ENCODE measurements at regions of chr1 and their contacts with region 1.

Region 1: GRCh38 chr1:214328770-214329469 is 48.0 kb downstream of the SMYD2 start:
- DNase-seq: peak; percentile 62 to 87 (median 75)
- ATAC-seq: peak; percentile 98
- H3K4me3 ChIP-seq: no peak overlapping the region
- H3K4me3 Mint-ChIP-seq: no peak overlapping the region
- H3K27ac ChIP-seq: no peak overlapping the region
- H3K27ac Mint-ChIP-seq: no peak overlapping the region
- H3K4me1 ChIP-seq: no peaks in the 10 kb centered on the region
- H3K4me1 Mint-ChIP-seq: no peaks in the 10 kb centered on the region
- H3K27me3 ChIP-seq: no peaks in the 10 kb centered on the region
- H3K27me3 Mint-ChIP-seq: no peaks in the 10 kb centered on the region
- CTCF ChIP-seq: peak; percentile 79

Region 2: GRCh38 chr1:213122514-213122929 is 1206.4 kb before region 1 on chr1:
- CTCF ChIA-PET with region 1: interaction called, 5 read pairs
- POLR2A ChIA-PET with region 1: no interaction called
- intact Hi-C with region 1: loop called in 1 of 2 experiments (anchors 5 kb)
- DNase-seq: peak in 2 of 9 experiments; percentile 33 to 47
- ATAC-seq: no peak
- H3K4me3 ChIP-seq: no peak overlapping the region
- H3K4me3 Mint-ChIP-seq: no peak overlapping the region
- H3K27ac ChIP-seq: no peak overlapping the region
- H3K27ac Mint-ChIP-seq: no peak overlapping the region
- H3K4me1 ChIP-seq: no peaks in the 10 kb centered on the region
- H3K4me1 Mint-ChIP-seq: peaks cover 6% of the 10 kb centered on the region
- H3K27me3 ChIP-seq: no peaks in the 10 kb centered on the region
- H3K27me3 Mint-ChIP-seq: no peaks in the 10 kb centered on the region
- CTCF ChIP-seq: peak; percentile 72

Region 3: GRCh38 chr1:213669964-213670691 is 658.8 kb before region 1 on chr1:
- CTCF ChIA-PET with region 1: no interaction called
- POLR2A ChIA-PET with region 1: no interaction called
- intact Hi-C with region 1: loop called in 1 of 2 experiments (anchors 10 kb)
- DNase-seq: peak; percentile 1 to 62 (median 12)
- ATAC-seq: peak; percentile 90
- H3K4me3 ChIP-seq: no peak overlapping the region
- H3K4me3 Mint-ChIP-seq: no peak overlapping the region
- H3K27ac ChIP-seq: no peak overlapping the region
- H3K27ac Mint-ChIP-seq: peak overlapping the region; percentile 25
- H3K4me1 ChIP-seq: peaks cover 5% of the 10 kb centered on the region
- H3K4me1 Mint-ChIP-seq: peaks cover 7% of the 10 kb centered on the region
- H3K27me3 ChIP-seq: no peaks in the 10 kb centered on the region
- H3K27me3 Mint-ChIP-seq: no peaks in the 10 kb centered on the region
- CTCF ChIP-seq: no peak

Region 4: GRCh38 chr1:214271174-214271858 is 57.6 kb before region 1 on chr1:
- CTCF ChIA-PET with region 1: interaction called, 87 read pairs
- POLR2A ChIA-PET with region 1: no interaction called
- intact Hi-C with region 1: loop called in 1 of 2 experiments (anchors 2 kb)
- DNase-seq: peak in 2 of 9 experiments; percentile 23 to 45
- ATAC-seq: no peak
- H3K4me3 ChIP-seq: no peak overlapping the region
- H3K4me3 Mint-ChIP-seq: no peak overlapping the region
- H3K27ac ChIP-seq: no peak overlapping the region
- H3K27ac Mint-ChIP-seq: no peak overlapping the region
- H3K4me1 ChIP-seq: no peaks in the 10 kb centered on the region
- H3K4me1 Mint-ChIP-seq: peaks cover 4% of the 10 kb centered on the region
- H3K27me3 ChIP-seq: peaks cover 0 to 3% of the 10 kb centered on the region in 2 experiments
- H3K27me3 Mint-ChIP-seq: peaks cover 2% of the 10 kb centered on the region
- CTCF ChIP-seq: no peak

Region 5: GRCh38 chr1:214310010-214310409 is 18.9 kb before region 1 on chr1:
- CTCF ChIA-PET with region 1: interaction called, 35 read pairs
- POLR2A ChIA-PET with region 1: interaction called, 4 read pairs
- intact Hi-C with region 1: no loop called
- DNase-seq: no peak
- ATAC-seq: no peak
- H3K4me3 ChIP-seq: peak overlapping the region in 1 of 2 experiments; percentile 6
- H3K4me3 Mint-ChIP-seq: peak overlapping the region; percentile 20
- H3K27ac ChIP-seq: no peak overlapping the region
- H3K27ac Mint-ChIP-seq: no peak overlapping the region
- H3K4me1 ChIP-seq: peaks cover 8% of the 10 kb centered on the region
- H3K4me1 Mint-ChIP-seq: peaks cover 38% of the 10 kb centered on the region
- H3K27me3 ChIP-seq: no peaks in the 10 kb centered on the region
- H3K27me3 Mint-ChIP-seq: no peaks in the 10 kb centered on the region
- CTCF ChIP-seq: no peak

Region 6: DNA sequence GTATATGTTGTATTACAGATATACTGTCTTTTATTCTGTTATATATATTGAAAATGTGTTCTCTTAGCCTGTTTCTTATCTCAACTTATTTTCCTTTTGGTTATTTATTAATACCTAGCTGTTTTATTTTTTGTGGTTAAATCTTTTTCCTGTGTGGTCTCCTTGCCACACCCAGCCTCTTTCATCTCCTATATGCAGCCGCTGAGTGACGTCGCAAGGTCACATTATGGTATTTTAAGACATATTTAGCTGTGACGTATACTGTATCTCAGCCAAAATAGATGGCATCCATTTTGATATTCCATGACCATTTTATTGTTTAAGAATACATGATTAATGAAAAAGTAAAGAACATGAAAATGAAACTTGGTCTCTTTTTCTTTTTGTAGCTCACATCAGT is 303.2 kb after region 1 on chr1:
- CTCF ChIA-PET with region 1: interaction called, 15 read pairs
- POLR2A ChIA-PET with region 1: no interaction called
- intact Hi-C with region 1: loop called (anchors 2 to 5 kb)
- DNase-seq: peak in 6 of 9 experiments; percentile 5 to 79 (median 46)
- ATAC-seq: peak; percentile 81
- H3K4me3 ChIP-seq: no peak overlapping the region
- H3K4me3 Mint-ChIP-seq: peak overlapping the region; percentile 42
- H3K27ac ChIP-seq: no peak overlapping the region
- H3K27ac Mint-ChIP-seq: peak overlapping the region; percentile 78
- H3K4me1 ChIP-seq: peaks cover 10% of the 10 kb centered on the region
- H3K4me1 Mint-ChIP-seq: peaks cover 19% of the 10 kb centered on the region
- H3K27me3 ChIP-seq: no peaks in the 10 kb centered on the region
- H3K27me3 Mint-ChIP-seq: no peaks in the 10 kb centered on the region
- CTCF ChIP-seq: no peak

Measured in CD8-positive, alpha-beta T cell (primary cell).